BJ (cell line): ENCODE measurements at regions of chr12 and their contacts with region 1.

Region 1: DNA sequence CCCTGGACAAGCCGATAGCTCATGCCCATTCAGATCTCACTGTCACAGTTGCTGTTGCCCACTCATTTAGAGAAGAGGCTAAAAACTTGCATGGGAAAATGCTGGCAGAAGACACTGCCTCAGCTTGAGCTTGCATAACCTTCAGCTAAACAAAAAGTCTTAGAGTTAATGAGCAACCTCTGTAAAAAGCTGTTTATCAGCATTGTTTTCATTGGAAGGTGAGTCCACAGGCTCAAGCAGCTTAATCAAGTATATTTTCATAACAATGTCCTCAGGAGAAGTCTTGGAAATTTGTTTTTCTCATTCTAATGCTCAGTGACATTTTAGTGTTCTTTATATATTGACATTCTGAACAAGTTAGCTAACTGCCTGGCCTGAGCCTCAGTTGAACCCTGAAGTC is 872.9 kb downstream of the TMTC2 start:
- DNase-seq: no peak
- H3K4me3 ChIP-seq: no peak overlapping the region
- H3K27me3 ChIP-seq: no peaks in the 10 kb centered on the region
- CTCF ChIP-seq: no peak

Region 2: DNA sequence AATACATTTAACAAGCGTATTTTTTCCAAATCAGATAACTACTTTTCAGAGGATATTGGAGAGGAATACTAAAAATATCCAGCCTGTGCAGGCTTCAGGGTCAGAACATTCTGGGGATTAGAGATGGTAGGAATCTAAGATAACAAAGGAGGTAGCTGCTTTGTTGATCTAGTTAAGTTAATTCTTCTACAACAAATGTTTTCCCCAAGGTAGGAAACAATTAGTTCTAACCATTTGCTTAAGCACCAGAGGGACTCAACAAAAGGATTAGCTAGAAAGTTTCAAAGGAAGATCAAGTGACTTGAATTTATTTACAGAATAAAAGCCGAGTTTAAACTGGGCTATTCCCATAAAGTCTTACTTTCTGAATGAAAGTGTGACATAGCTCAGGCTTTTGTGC is 348.7 kb before region 1 on chr12:
- CTCF ChIA-PET with region 1: no interaction called
- POLR2A ChIA-PET with region 1: interaction called, 10 read pairs
- DNase-seq: no peak
- H3K4me3 ChIP-seq: no peak overlapping the region
- H3K27me3 ChIP-seq: no peaks in the 10 kb centered on the region
- CTCF ChIP-seq: no peak